ENCODE measurements at regions of chr12 and their contacts with region 1.

Region 1: GRCh38 chr12:6607751-6608591 is 792 bp upstream of the CHD4 start:
- DNase-seq: peak; percentile 79
- H3K4me3 ChIP-seq: no peak overlapping the region
- H3K27ac ChIP-seq: peak overlapping the region; percentile 4 to 82
- H3K4me1 ChIP-seq: peaks cover 44% of the 10 kb centered on the region
- H3K27me3 ChIP-seq: no peaks in the 10 kb centered on the region
- CTCF ChIP-seq: peak in 1 of 3 experiments; percentile 3
- POLR2A ChIP-seq: no peak

Region 2: DNA sequence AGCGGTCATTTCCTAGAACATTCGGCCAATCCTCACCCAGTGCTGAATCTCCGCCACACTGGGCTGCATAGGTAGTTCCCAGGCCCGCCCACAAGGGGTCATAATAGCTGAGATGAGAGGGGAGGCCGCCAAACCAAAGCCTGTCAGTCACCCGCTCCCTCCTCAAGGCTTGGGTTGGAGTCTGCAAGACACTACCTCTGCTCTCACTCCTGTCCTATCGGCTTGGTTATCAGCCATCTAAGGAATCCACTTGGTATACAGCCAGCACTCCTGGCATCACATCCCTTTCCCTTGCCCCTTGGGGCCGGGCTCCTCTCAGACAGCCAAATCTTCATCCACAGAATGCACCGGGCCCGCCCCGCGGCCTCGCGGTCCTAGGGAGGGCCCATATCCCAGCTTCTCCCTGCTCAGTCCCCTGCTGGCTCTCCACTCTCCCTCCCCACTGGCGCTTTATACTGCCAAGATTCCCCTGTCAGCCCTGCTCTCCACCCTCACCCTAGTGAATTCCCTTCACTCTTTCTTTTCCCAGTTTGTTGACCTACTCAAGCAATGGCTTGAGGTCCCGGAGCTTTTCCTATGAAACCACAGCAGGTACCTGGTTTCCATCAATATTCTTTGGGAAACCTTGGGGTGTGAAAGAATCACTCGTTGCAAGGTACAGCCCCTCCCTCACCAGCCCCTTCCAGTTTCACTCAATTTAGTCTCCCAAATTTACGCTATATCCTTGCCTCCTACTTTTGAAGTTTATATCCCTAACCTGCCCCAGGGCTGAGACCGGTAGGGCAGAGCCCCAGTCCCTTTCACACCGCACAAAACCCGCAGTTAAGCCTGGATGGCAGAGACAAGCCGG is 53.6 kb before region 1 on chr12:
- intact Hi-C with region 1: loop called (anchors 10 kb)
- DNase-seq: peak; percentile 89
- H3K4me3 ChIP-seq: peak overlapping the region; percentile 65 to 83
- H3K27ac ChIP-seq: peak overlapping the region; percentile 48 to 83
- H3K4me1 ChIP-seq: peaks cover 54% of the 10 kb centered on the region
- H3K27me3 ChIP-seq: no peaks in the 10 kb centered on the region
- CTCF ChIP-seq: peak; percentile 25 to 56 (median 55)
- POLR2A ChIP-seq: no peak

Measured in testis (tissue), 5 donors.